ENCODE measurements at regions of chr17 and their contacts with region 1.

Region 1: DNA sequence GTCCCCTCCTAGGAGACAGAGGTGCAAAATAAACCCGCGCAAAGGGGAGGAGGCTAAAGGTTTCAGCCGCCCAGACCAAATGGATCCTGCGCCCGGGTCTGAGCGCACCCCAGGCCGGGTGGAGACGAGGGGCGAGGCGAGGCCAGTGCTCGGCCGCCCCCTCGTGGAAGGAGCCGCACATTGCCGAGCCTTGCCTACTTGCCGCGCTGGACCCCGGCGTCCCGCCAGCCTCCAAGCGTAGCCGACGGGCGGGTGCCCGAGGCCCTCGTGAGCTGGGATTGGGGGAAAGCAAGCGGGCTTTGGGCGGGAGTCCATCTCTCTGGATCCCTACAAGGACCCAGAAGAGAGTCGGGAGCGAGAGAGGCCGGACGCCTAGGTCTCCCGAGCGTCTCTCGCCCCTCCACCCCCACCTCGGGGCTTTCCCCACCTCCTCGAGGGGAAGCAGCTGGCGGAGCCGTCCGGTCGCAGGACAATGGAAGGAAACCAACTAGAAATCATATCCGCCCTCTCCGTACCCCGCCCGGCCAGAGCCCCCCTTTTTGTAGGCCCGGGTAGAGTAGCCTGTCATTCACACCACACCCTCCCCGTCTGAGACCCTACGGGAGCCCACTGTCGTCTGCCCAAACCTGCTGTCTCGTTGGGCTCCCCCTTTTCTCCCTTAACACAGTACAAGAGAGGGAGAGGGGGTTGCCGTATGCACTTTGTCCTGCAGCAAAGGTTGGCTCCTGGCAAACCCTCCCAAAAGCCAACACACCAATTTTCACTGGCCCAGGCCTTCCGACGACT is 664 bp upstream of the BCL6B start:
- DNase-seq: peak; percentile 86 to 89
- ATAC-seq: peak; percentile 56 to 75 (median 69)
- H3K4me3 ChIP-seq: peak overlapping the region; percentile 9 to 68 (median 59)
- H3K27ac ChIP-seq: peak overlapping the region; percentile 87 to 100 (median 96)
- H3K4me1 ChIP-seq: peaks cover 20 to 81% (median 56%) of the 10 kb centered on the region in 9 donors
- H3K27me3 ChIP-seq: peaks cover 0 to 18% (median 10%) of the 10 kb centered on the region in 7 donors
- CTCF ChIP-seq: peak; percentile 96 to 98 (median 97)

Region 2: GRCh38 chr17:6651357-6651918 is 370.7 kb before region 1 on chr17 and contains the starts of genes C17orf100 and MED31:
- intact Hi-C with region 1: loop called in 1 of 10 experiments (anchors 5 kb)
- DNase-seq: peak; percentile 95 to 97
- ATAC-seq: peak; percentile 99 to 100 (median 99)
- H3K4me3 ChIP-seq: peak within 1 kb of the TSS; percentile 54 to 93 (median 72)
- H3K27ac ChIP-seq: peak within 1 kb of the TSS; percentile 32 to 93 (median 74)
- H3K4me1 ChIP-seq: peaks cover 8 to 65% (median 40%) of the 10 kb centered on the region in 9 donors
- H3K27me3 ChIP-seq: peaks cover 0 to 45% (median 24%) of the 10 kb centered on the region in 7 donors
- CTCF ChIP-seq: no peak
- total RNA-seq, gene C17orf100: 0.30 to 1.2 (median 0.57) TPM in 9 of 10 donors, not detected in the other
- total RNA-seq, gene MED31: 8.4 to 17.5 (median 14.2) TPM

Region 3: GRCh38 chr17:6753006-6753445 is 269.2 kb before region 1 on chr17:
- intact Hi-C with region 1: loop called in 6 of 10 experiments (anchors 10 kb)
- DNase-seq: peak; percentile 65 to 82
- ATAC-seq: peak; percentile 75 to 91 (median 85)
- H3K4me3 ChIP-seq: peak overlapping the region in 1 of 10 donors; percentile 0
- H3K27ac ChIP-seq: peak overlapping the region; percentile 82 to 98 (median 94)
- H3K4me1 ChIP-seq: peaks cover 16 to 62% (median 48%) of the 10 kb centered on the region in 9 donors
- H3K27me3 ChIP-seq: no peaks in the 10 kb centered on the region
- CTCF ChIP-seq: no peak

Region 4: GRCh38 chr17:6913608-6914443 is 108.4 kb before region 1 on chr17:
- intact Hi-C with region 1: loop called in 6 of 10 experiments (anchors 5 kb)
- DNase-seq: peak; percentile 80 to 84
- ATAC-seq: peak; percentile 78 to 95 (median 84)
- H3K4me3 ChIP-seq: peak overlapping the region in 7 of 10 donors; percentile 24 to 53 (median 44)
- H3K27ac ChIP-seq: no peak overlapping the region
- H3K4me1 ChIP-seq: peaks cover 0 to 22% (median 9%) of the 10 kb centered on the region in 9 donors
- H3K27me3 ChIP-seq: peaks cover 0 to 12% (median 5%) of the 10 kb centered on the region in 7 donors
- CTCF ChIP-seq: peak; percentile 77 to 94 (median 87)

Region 5: DNA sequence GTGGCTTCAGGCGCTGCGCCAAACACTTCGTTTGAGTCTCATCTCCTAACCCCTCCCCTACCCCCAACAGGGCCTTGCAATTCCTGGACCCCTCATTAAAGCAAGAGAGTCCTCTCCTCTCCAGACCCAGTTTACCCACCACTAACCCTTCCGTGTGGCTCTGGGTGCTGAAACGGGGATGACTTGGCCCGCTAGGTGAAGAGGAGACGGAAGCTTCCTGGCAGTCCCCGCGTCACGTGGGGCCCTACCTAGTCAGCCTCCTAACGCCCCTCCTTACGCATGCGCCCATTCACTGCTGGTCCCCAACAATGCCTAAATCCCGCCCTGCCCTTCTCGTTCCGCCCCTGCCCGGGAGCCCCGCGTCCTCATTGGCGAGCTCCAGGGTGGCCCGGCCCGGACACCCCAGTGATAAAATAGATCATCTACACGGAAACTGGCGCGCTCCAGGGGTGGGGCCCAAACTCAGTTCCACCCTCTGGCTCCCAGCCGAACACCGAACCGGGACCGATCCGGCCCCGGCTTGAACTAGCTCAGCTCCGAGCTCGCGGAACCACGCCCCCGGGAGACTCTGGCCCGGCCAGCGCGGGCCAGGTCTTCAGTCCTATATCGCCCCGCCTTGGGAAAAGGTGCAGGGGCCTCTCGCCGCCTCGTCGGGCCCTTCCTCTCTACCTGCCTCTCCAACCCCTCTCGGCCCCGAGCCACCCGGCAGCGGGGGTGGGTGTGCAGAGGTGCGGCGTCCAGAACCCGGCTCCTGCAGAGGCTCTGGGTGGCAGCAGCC is 13.6 kb after region 1 on chr17 and contains the start of gene SLC16A13:
- intact Hi-C with region 1: loop called in 1 of 10 experiments (anchors 1 kb)
- DNase-seq: peak; percentile 93 to 95
- ATAC-seq: peak; percentile 93 to 96 (median 94)
- H3K4me3 ChIP-seq: peak within 1 kb of the TSS; percentile 50 to 76 (median 62)
- H3K27ac ChIP-seq: peak within 1 kb of the TSS; percentile 74 to 96 (median 89)
- H3K4me1 ChIP-seq: peaks cover 0 to 38% (median 19%) of the 10 kb centered on the region in 9 donors
- H3K27me3 ChIP-seq: no peaks in the 10 kb centered on the region
- CTCF ChIP-seq: peak in 1 of 9 donors; percentile 4
- total RNA-seq, gene SLC16A13: 0.70 to 2.1 (median 1.5) TPM

Measured in heart right ventricle (tissue), 16 donors.